Endothelial cell of umbilical vein (primary cell): ENCODE measurements at regions of chr18 and their contacts with region 1.

Region 1: GRCh38 chr18:25058521-25058920 is 293.4 kb downstream of the ZNF521 start:
- DNase-seq: no peak
- H3K4me3 ChIP-seq: no peak overlapping the region
- H3K27ac ChIP-seq: no peak overlapping the region
- H3K4me1 ChIP-seq: peaks cover 17% of the 10 kb centered on the region
- H3K27me3 ChIP-seq: no peaks in the 10 kb centered on the region
- CTCF ChIP-seq: no peak
- POLR2A ChIP-seq: no peak

Region 2: GRCh38 chr18:24593886-24594285 is 464.6 kb before region 1 on chr18:
- CTCF ChIA-PET with region 1: no interaction called
- POLR2A ChIA-PET with region 1: no interaction called
- dilution Hi-C with region 1: no loop called
- intact Hi-C with region 1: no loop called
- DNase-seq: no peak
- H3K4me3 ChIP-seq: no peak overlapping the region
- H3K27ac ChIP-seq: no peak overlapping the region
- H3K4me1 ChIP-seq: no peaks in the 10 kb centered on the region
- H3K27me3 ChIP-seq: peaks cover 6 to 19% of the 10 kb centered on the region in 2 experiments
- CTCF ChIP-seq: no peak
- POLR2A ChIP-seq: no peak

Region 3: DNA sequence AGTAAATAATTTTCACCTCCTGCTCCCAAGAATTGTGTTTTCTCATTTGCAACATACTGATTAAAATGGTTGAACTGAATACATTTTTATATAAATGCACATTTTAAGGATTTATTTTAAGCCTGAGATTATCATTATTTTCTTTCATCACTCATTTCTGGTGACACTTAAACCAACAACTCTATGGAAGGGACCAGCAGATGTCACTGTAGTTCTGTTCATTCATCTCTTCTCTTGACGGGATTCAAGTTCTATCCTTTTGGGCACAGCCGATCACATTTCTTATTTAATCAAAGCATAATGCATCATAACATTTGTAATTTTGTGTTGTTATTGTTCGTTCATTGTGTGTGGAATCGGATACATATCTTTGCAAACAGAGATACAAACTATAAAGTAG is 180.2 kb before region 1 on chr18:
- CTCF ChIA-PET with region 1: no interaction called
- POLR2A ChIA-PET with region 1: no interaction called
- dilution Hi-C with region 1: no loop called
- intact Hi-C with region 1: loop called (anchors 5 kb)
- DNase-seq: peak; percentile 75
- H3K4me3 ChIP-seq: no peak overlapping the region
- H3K27ac ChIP-seq: no peak overlapping the region
- H3K4me1 ChIP-seq: peaks cover 11% of the 10 kb centered on the region
- H3K27me3 ChIP-seq: no peaks in the 10 kb centered on the region
- CTCF ChIP-seq: peak; percentile 23 to 44
- POLR2A ChIP-seq: no peak

Region 4: DNA sequence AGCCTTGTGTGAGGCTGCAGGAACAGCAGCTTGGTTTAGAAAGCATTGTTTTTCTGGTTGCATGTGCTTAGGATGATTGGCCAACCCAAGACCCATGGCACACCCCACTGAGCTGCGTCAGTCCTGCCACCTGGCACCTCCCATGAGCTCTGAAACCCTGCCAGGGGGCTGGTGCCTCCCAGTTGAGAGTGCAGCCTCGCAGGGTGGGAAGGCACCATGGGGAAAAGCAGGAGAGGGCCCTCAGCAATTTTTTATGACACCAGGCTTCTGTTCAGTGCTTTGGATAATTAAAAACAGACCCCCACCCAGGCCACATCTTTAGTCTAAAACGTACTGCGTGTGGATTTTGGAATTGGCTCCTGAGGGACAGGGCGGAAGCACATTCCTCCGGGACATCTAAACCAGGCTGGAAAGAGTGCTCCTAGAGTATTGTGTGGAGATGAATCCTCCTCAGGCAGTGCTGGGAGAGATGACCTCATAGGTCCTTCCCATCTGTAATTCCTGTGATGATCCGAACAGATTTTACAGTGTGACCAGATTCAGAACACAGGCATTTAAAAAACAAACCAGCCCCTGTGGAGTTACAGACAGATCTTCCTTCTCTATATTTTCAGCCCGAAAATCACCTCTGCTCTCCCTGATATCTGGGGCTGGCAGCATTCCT is 144.9 kb before region 1 on chr18:
- CTCF ChIA-PET with region 1: no interaction called
- POLR2A ChIA-PET with region 1: no interaction called
- dilution Hi-C with region 1: no loop called
- intact Hi-C with region 1: loop called (anchors 5 kb)
- DNase-seq: no peak
- H3K4me3 ChIP-seq: no peak overlapping the region
- H3K27ac ChIP-seq: peak overlapping the region; percentile 65
- H3K4me1 ChIP-seq: peaks cover 33% of the 10 kb centered on the region
- H3K27me3 ChIP-seq: no peaks in the 10 kb centered on the region
- CTCF ChIP-seq: no peak
- POLR2A ChIP-seq: no peak

Region 5: GRCh38 chr18:25099895-25100294 is 41.4 kb after region 1 on chr18:
- CTCF ChIA-PET with region 1: no interaction called
- POLR2A ChIA-PET with region 1: no interaction called
- dilution Hi-C with region 1: no loop called
- intact Hi-C with region 1: loop called (anchors 2 kb)
- DNase-seq: peak; percentile 63
- H3K4me3 ChIP-seq: no peak overlapping the region
- H3K27ac ChIP-seq: peak overlapping the region; percentile 20
- H3K4me1 ChIP-seq: peaks cover 58% of the 10 kb centered on the region
- H3K27me3 ChIP-seq: no peaks in the 10 kb centered on the region
- CTCF ChIP-seq: no peak
- POLR2A ChIP-seq: no peak

Region 6: DNA sequence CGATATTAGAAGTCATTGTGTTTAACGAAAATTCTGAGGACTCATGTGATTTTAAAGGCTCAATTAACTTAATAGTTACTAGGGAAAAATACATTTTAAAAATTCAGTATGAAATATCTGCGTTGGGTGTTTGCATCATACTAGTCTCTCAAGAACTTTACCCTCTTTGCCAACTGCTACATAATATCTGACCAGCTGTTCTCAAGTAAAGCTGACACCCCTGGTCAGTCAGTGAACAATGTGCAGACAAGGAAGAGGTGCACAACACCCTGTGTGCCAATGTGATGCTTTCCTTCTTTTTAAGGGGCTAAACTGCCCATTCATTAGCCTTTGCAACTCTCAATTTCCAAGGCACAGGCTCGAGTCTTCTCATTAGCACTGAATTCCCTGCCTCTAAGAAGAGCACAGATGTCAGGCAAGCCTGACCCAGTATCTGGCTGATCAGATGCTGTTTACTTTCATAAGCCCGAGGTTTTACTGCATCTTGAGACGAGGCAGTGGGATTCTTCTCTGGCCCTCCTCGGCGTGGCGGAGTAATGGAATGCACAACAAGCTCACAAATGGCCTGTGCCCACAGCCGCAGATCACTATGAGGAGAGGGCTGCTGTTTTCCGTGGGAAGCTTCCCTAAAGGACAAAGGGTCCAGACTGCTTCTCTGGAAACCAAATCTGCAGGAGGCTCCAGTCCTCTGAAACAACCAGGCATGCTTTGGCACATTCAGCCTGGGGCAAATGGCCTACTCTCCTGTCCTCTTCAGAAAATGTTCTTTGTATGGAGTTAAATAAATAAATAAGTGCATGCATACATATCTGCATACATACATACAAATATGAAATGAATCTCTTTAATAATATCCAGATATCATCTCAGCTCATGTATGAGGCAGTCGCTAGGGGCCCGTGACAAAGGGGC is 53.1 kb after region 1 on chr18:
- CTCF ChIA-PET with region 1: no interaction called
- POLR2A ChIA-PET with region 1: no interaction called
- dilution Hi-C with region 1: no loop called
- intact Hi-C with region 1: no loop called
- DNase-seq: no peak
- H3K4me3 ChIP-seq: no peak overlapping the region
- H3K27ac ChIP-seq: no peak overlapping the region
- H3K4me1 ChIP-seq: no peaks in the 10 kb centered on the region
- H3K27me3 ChIP-seq: no peaks in the 10 kb centered on the region
- CTCF ChIP-seq: no peak
- POLR2A ChIP-seq: no peak